ENCODE measurements at regions of chr12 and their contacts with region 1.

Region 1: DNA sequence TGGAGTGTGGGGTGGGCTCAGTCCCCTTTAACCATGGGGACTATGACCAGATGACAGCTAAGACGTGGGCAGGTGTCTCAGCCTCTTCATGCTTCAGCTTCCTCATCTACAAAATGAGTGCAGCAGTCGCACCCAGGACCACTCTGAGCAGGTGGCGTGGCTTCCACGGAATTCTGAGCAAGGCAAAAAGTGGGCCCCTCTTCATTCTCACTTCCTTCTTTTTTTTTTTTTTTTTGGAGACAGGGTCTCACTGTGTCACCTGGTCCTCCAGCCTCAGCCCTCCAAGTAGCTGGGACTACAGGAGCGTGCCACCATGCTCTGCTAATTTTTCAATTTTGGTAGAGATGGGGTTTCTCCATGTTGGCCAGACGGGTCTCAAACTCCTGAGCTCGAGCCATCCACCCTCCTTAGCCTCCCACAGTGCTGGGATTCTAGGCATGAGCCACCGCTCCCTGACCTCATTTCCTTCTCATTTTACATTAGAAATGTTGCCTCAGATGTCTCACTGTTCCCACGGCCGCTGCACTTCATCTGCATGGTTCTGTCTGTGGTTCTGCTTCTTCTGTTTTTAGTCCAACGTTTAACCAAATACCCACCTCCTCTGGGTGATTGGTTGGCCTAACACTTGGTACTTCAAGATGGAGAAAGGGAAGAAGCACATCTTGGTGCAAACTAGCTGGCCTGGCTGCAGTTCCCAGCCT is 41.3 kb upstream of the BCL7A start:
- DNase-seq: no peak
- ATAC-seq: peak; percentile 78
- H3K4me3 Mint-ChIP-seq: peak overlapping the region; percentile 70
- H3K27ac Mint-ChIP-seq: peak overlapping the region; percentile 90
- H3K4me1 Mint-ChIP-seq: peaks cover 59% of the 10 kb centered on the region
- H3K27me3 Mint-ChIP-seq: no peaks in the 10 kb centered on the region
- CTCF ChIP-seq: no peak

Region 2: GRCh38 chr12:121543786-121544185 is 436.6 kb before region 1 on chr12:
- CTCF ChIA-PET with region 1: no interaction called
- POLR2A ChIA-PET with region 1: interaction called, 15 read pairs
- intact Hi-C with region 1: no loop called
- DNase-seq: no peak
- ATAC-seq: no peak
- H3K4me3 Mint-ChIP-seq: no peak overlapping the region
- H3K27ac Mint-ChIP-seq: no peak overlapping the region
- H3K4me1 Mint-ChIP-seq: peaks cover 16% of the 10 kb centered on the region
- H3K27me3 Mint-ChIP-seq: no peaks in the 10 kb centered on the region
- CTCF ChIP-seq: no peak

Region 3: GRCh38 chr12:121802846-121803630 is 177.3 kb before region 1 on chr12:
- CTCF ChIA-PET with region 1: no interaction called
- POLR2A ChIA-PET with region 1: interaction called, 15 read pairs
- intact Hi-C with region 1: no loop called
- DNase-seq: peak; percentile 91
- ATAC-seq: peak; percentile 40
- H3K4me3 Mint-ChIP-seq: peak overlapping the region; percentile 93
- H3K27ac Mint-ChIP-seq: peak overlapping the region; percentile 100
- H3K4me1 Mint-ChIP-seq: peaks cover 57% of the 10 kb centered on the region
- H3K27me3 Mint-ChIP-seq: no peaks in the 10 kb centered on the region
- CTCF ChIP-seq: no peak

Region 4: DNA sequence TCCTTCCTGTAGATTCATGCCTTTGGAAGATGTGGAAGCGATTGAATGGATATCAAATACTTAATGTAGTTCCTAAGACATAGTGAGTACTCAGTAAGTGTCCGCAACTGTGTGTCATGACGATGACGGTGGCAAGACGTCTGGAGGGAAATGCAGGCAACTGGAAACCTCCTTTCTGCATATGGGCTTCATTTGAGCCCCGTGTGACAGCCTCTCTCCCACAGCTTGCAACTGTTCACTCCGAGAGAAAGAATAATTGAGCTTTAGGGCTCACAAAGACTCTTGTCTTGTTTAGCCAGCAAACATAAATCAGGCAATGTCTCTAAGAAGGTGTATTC is 55.0 kb before region 1 on chr12:
- CTCF ChIA-PET with region 1: no interaction called
- POLR2A ChIA-PET with region 1: no interaction called
- intact Hi-C with region 1: no loop called
- DNase-seq: no peak
- ATAC-seq: no peak
- H3K4me3 Mint-ChIP-seq: no peak overlapping the region
- H3K27ac Mint-ChIP-seq: no peak overlapping the region
- H3K4me1 Mint-ChIP-seq: peaks cover 19% of the 10 kb centered on the region
- H3K27me3 Mint-ChIP-seq: no peaks in the 10 kb centered on the region
- CTCF ChIP-seq: no peak

Region 5: DNA sequence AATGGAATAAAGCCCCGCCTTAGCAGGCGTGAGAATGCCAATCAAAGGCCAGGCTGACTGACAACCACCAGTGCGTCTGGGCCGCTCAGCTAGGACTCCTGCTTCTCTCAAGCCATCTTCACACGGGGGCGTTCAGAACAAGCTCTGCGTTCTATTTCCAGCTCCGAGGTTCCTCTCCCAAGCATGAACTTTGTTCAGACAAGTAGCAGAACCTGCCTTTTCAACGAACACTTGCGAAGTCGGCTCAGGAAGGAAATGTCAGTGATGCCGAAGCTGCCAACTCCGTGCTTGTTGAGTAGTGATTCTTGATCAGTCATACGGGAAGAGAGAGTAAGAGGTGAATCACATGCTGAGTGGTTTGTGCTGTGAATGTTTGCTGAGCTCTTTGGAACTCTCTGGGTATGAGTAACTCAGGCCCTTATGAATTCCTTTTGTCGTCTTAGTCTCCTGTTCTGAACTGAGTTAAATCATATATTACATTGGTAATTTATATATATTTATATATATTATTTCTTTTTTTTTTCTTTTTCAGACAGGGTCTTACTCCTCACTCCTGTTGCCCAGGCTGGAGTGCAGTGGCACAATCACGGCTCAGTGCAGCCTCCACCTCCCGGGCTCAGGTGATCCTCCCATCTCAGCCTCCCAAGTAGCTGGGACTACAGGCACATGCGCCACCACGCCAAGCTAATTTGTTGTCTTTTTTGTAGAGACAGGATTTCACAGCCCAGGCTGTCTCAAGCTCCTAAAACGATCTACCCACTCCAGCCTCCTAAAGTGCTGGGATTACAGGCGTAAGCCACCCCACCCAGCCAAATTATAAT is 11.9 kb after region 1 on chr12:
- CTCF ChIA-PET with region 1: interaction called, 8 read pairs
- POLR2A ChIA-PET with region 1: interaction called, 98 read pairs
- intact Hi-C with region 1: loop called (anchors 1 kb)
- DNase-seq: peak; percentile 48
- ATAC-seq: peak; percentile 87
- H3K4me3 Mint-ChIP-seq: peak overlapping the region; percentile 75
- H3K27ac Mint-ChIP-seq: peak overlapping the region; percentile 97
- H3K4me1 Mint-ChIP-seq: peaks cover 49% of the 10 kb centered on the region
- H3K27me3 Mint-ChIP-seq: no peaks in the 10 kb centered on the region
- CTCF ChIP-seq: no peak

Region 6: GRCh38 chr12:122003651-122004611 is 23.6 kb after region 1 on chr12:
- CTCF ChIA-PET with region 1: interaction called, 5 read pairs
- POLR2A ChIA-PET with region 1: interaction called, 36 read pairs
- intact Hi-C with region 1: loop called (anchors 1 kb)
- DNase-seq: peak; percentile 68
- ATAC-seq: peak; percentile 86
- H3K4me3 Mint-ChIP-seq: peak overlapping the region; percentile 67
- H3K27ac Mint-ChIP-seq: peak overlapping the region; percentile 87
- H3K4me1 Mint-ChIP-seq: peaks cover 76% of the 10 kb centered on the region
- H3K27me3 Mint-ChIP-seq: peaks cover 3% of the 10 kb centered on the region
- CTCF ChIP-seq: no peak

Region 7: GRCh38 chr12:122021822-122022526 is 41.6 kb after region 1 on chr12 and contains the start of gene BCL7A:
- CTCF ChIA-PET with region 1: interaction called, 3 read pairs
- POLR2A ChIA-PET with region 1: interaction called, 57 read pairs
- intact Hi-C with region 1: loop called (anchors 1 kb)
- DNase-seq: peak; percentile 72
- ATAC-seq: peak; percentile 76
- H3K4me3 Mint-ChIP-seq: peak within 1 kb of the TSS; percentile 91
- H3K27ac Mint-ChIP-seq: peak within 1 kb of the TSS; percentile 95
- H3K4me1 Mint-ChIP-seq: peaks cover 46% of the 10 kb centered on the region
- H3K27me3 Mint-ChIP-seq: peaks cover 2% of the 10 kb centered on the region
- CTCF ChIP-seq: no peak
- total RNA-seq, gene BCL7A: 38.6 and 41.4 TPM in 2 replicates

Region 8: DNA sequence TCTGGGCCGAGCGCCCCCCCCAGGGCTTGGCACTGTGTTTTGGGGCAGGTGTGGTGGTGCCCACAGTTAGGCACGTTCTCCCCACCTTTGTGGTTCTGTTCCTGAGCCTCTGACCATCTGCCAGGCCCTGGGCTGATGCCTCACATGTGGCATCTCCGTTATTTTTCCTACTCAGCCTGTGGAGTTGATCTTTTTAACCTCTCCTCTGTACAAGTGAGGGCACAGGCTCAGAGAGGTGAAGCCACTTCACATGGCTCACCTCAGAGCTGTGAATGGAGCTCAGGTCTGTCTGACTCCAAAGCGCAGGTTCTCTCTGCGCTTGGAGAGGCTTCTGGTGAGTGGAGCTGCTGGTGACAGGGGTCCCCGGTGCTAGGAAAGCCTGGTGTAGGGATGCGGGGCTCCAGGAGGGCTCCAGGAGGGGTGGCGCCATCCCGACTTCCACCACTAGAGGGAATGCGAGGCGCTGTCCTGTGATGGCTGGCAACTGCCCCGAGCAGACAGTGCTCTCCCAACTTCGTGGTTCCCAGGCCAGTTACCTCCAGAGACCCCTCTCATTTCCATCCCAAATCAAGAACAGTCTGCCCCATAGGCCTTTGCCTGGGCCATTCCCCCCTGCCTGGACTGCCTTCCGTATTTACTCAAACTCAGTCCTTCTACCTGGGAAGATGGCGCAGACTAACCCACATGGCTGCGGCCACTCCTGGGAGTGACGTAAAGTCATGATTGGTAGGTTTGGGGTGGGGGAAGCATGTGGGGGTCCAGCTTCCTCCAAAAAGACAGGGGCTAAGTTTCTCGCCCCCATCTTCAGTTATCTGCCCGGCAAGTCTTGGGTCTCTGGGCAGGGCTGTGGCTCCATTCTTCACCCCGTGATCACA is 51.2 kb after region 1 on chr12:
- CTCF ChIA-PET with region 1: interaction called, 5 read pairs
- POLR2A ChIA-PET with region 1: interaction called, 12 read pairs
- intact Hi-C with region 1: no loop called
- DNase-seq: peak; percentile 61
- ATAC-seq: peak; percentile 21
- H3K4me3 Mint-ChIP-seq: no peak overlapping the region
- H3K27ac Mint-ChIP-seq: peak overlapping the region; percentile 81
- H3K4me1 Mint-ChIP-seq: peaks cover 63% of the 10 kb centered on the region
- H3K27me3 Mint-ChIP-seq: no peaks in the 10 kb centered on the region
- CTCF ChIP-seq: no peak

Region 9: GRCh38 chr12:122200541-122201175 is 220.3 kb after region 1 on chr12:
- CTCF ChIA-PET with region 1: no interaction called
- POLR2A ChIA-PET with region 1: no interaction called
- intact Hi-C with region 1: no loop called
- DNase-seq: no peak
- ATAC-seq: no peak
- H3K4me3 Mint-ChIP-seq: no peak overlapping the region
- H3K27ac Mint-ChIP-seq: no peak overlapping the region
- H3K4me1 Mint-ChIP-seq: peaks cover 7% of the 10 kb centered on the region
- H3K27me3 Mint-ChIP-seq: peaks cover 31% of the 10 kb centered on the region
- CTCF ChIP-seq: no peak